CD14-positive monocyte (primary cell): ENCODE measurements at regions of chrX and their contacts with region 1.

Region 1: DNA sequence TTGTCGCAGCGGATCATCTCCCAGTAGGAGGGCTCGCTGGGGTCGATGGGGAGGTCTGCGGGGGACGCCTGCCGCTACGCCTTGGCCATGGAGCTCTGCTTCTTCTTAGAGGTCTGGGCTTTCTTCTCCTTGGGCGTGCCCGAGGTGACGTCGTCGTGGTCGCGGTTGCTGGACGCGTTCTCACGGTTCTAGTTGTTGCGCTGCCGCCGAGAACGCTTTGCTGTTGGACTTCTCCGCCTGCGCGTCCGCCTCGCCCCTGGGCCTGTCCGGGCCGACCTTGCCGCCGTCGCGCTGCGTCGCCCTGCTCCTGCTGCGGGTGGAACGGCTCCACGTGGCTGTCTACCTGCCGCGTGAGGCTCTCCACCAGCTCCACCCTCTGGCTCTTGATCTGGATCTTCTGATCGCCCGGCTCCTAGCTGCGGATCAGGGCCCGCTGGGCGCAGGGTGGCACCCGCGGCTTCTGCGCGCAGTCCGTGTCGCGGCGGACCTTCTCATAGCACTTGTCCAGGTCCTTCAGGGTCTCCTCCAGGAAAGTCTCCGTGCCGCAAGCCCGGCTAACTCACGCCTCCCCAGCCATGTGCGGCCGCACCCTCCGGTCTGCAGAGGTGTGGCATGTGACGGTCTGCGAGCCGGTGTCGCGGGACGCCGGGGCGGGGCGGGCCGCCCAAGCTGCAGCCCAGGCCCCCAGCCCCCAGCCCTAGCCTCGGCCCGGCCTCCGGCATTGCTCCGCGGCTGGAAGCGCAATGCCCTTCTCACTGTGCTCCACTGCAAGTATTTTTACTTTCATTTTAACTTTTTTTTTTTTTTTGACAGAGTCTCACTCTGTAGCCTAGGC is 40.5 kb upstream of the OGT start:
- DNase-seq: peak; percentile 43 to 61 (median 61)
- H3K4me3 ChIP-seq: peak overlapping the region; percentile 38 to 80 (median 67)
- H3K4me3 Mint-ChIP-seq: peak overlapping the region; percentile 90
- H3K27ac ChIP-seq: peak overlapping the region in 1 of 2 donors; percentile 66
- H3K27ac Mint-ChIP-seq: peak overlapping the region in 5 of 7 donors; percentile 5 to 85 (median 75)
- H3K4me1 ChIP-seq: peaks cover 0 to 4% of the 10 kb centered on the region in 2 donors
- H3K4me1 Mint-ChIP-seq: peaks cover 11% of the 10 kb centered on the region
- H3K27me3 ChIP-seq: no peaks in the 10 kb centered on the region
- H3K27me3 Mint-ChIP-seq: peaks cover 0 to 12% (median 3%) of the 10 kb centered on the region in 3 donors
- CTCF ChIP-seq: no peak

Region 2: GRCh38 chrX:71541210-71542022 is 49.0 kb after region 1 on chrX:
- intact Hi-C with region 1: loop called in 1 of 2 experiments (anchors 10 kb)
- DNase-seq: peak; percentile 70 to 74 (median 73)
- H3K4me3 ChIP-seq: peak overlapping the region in 1 of 3 experiments; percentile 39
- H3K4me3 Mint-ChIP-seq: peak overlapping the region; percentile 38 to 84
- H3K27ac ChIP-seq: peak overlapping the region in 1 of 2 donors; percentile 68
- H3K27ac Mint-ChIP-seq: peak overlapping the region; percentile 85 to 92 (median 91)
- H3K4me1 ChIP-seq: peaks cover 52 to 60% of the 10 kb centered on the region in 2 donors
- H3K4me1 Mint-ChIP-seq: peaks cover 57% of the 10 kb centered on the region
- H3K27me3 ChIP-seq: no peaks in the 10 kb centered on the region
- H3K27me3 Mint-ChIP-seq: peaks cover 0 to 2% (median 0%) of the 10 kb centered on the region in 3 donors
- CTCF ChIP-seq: no peak